Activated naive CD4-positive, alpha-beta T cell treated with anti-CD3 and anti-CD28 coated beads for 36 hours (primary cell): ENCODE measurements at regions of chr2 and their contacts with region 1.

Region 1: GRCh38 chr2:168210895-168211570 is 36.4 kb downstream of the STK39 start:
- DNase-seq: no peak
- H3K4me3 Mint-ChIP-seq: peak overlapping the region; percentile 6
- H3K27ac Mint-ChIP-seq: peak overlapping the region; percentile 98
- H3K4me1 Mint-ChIP-seq: peaks cover 63% of the 10 kb centered on the region
- H3K27me3 Mint-ChIP-seq: no peaks in the 10 kb centered on the region

Region 2: DNA sequence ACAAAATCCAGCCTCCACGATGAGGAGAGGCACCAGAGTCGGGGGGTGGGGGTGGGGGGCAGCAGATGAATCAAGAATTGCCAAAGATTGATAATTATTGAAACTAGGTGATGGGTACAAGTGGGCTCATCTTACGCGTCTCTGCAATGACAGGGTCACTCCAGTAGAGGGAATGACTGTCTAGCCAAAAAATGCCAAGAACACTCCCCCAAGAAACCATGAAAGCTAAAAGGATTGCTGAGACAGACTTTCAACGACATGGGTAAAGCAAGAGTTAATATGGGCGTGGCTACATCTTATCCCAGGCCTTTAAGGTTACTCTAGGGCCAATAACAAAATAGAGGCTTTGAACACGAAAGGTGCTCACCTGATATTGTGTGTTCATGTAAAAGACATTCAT is 50.1 kb before region 1 on chr2:
- CTCF ChIA-PET with region 1: interaction called, 3 read pairs
- intact Hi-C with region 1: loop called (anchors 1 kb)
- DNase-seq: peak; percentile 32
- H3K4me3 Mint-ChIP-seq: no peak overlapping the region
- H3K27ac Mint-ChIP-seq: no peak overlapping the region
- H3K4me1 Mint-ChIP-seq: peaks cover 32% of the 10 kb centered on the region
- H3K27me3 Mint-ChIP-seq: no peaks in the 10 kb centered on the region

Region 3: DNA sequence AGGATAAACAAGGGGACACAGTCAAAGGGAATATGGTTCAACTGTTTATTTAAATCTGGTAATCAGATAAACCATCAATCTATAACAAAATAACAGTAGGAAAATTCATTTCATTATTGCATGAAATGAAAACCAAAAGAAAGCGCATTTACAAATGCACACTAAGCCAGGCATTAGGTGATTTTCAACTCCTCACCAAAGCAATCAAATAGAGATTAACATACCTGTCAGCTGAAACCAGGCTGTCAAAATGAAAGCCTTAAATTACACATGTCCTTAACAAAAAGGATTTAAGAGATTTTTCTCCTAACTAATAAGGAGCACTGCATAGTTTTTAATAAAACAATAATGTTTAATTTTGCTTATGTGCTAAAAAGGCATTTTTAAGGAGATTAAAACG is 13.3 kb after region 1 on chr2:
- CTCF ChIA-PET with region 1: interaction called, 7 read pairs
- intact Hi-C with region 1: loop called (anchors 1 kb)
- DNase-seq: no peak
- H3K4me3 Mint-ChIP-seq: no peak overlapping the region
- H3K27ac Mint-ChIP-seq: no peak overlapping the region
- H3K4me1 Mint-ChIP-seq: peaks cover 46% of the 10 kb centered on the region
- H3K27me3 Mint-ChIP-seq: no peaks in the 10 kb centered on the region

Region 4: GRCh38 chr2:168246483-168247340 is 35.7 kb after region 1 on chr2:
- CTCF ChIA-PET with region 1: interaction called, 3 read pairs
- intact Hi-C with region 1: loop called (anchors 1 kb)
- DNase-seq: peak; percentile 78
- H3K4me3 Mint-ChIP-seq: peak overlapping the region; percentile 88
- H3K27ac Mint-ChIP-seq: peak overlapping the region; percentile 88
- H3K4me1 Mint-ChIP-seq: peaks cover 35% of the 10 kb centered on the region
- H3K27me3 Mint-ChIP-seq: peaks cover 3% of the 10 kb centered on the region

Region 5: GRCh38 chr2:168495524-168495923 is 284.5 kb after region 1 on chr2:
- CTCF ChIA-PET with region 1: no interaction called
- intact Hi-C with region 1: loop called (anchors 1 kb)
- DNase-seq: peak; percentile 35
- H3K4me3 Mint-ChIP-seq: no peak overlapping the region
- H3K27ac Mint-ChIP-seq: no peak overlapping the region
- H3K4me1 Mint-ChIP-seq: peaks cover 61% of the 10 kb centered on the region
- H3K27me3 Mint-ChIP-seq: no peaks in the 10 kb centered on the region

Region 6: DNA sequence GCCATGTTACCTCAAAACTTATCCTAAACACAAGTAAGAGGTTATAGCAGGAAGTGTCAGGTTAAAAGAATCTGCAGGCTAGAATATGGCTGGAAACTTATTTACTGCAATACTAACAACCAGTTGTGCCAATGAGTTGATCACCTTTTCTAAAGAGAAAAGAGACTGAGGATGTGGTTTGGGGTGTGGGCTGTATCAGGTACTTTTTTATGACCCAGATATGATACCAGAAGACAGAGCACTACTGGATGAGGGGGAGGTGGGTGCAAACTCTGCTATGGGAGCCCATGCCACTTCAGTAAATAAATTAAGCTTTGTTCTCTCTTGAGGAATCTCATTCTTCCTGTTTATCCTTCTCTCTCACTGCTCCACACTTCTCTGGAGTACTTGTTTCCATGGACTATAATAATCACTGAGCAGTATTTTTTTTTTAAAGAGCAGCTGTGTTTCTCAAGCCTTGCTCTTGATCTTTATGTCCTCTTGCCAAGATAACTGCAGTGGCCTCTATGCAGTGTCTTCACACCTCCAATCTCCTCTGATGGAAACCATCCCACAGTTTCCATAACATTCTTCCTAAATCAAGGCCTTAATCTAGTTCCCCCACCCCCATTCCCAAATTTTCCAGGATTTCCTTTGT is 540.2 kb after region 1 on chr2:
- CTCF ChIA-PET with region 1: no interaction called
- intact Hi-C with region 1: loop called (anchors 5 kb)
- DNase-seq: peak; percentile 59
- H3K4me3 Mint-ChIP-seq: no peak overlapping the region
- H3K27ac Mint-ChIP-seq: no peak overlapping the region
- H3K4me1 Mint-ChIP-seq: peaks cover 70% of the 10 kb centered on the region
- H3K27me3 Mint-ChIP-seq: no peaks in the 10 kb centered on the region

Region 7: DNA sequence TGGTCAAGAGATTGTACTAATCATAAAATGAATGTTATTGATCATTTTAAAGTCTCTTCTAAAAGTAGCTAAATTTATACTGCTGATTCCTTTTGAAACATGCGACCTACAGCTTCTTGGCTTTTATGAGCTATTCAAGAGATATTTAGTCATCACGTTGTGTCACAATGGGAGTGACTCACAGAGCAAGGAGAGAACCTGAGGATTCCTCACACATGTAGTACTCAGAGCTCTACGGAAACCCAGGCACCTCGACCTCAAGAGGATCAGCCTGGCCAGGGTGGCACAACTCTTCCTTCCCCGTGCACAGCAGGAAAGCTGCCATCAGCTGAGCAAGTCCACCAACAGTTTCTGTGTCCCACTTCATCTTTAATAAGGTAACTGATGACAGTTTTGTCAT is 858.3 kb after region 1 on chr2 and contains the start of gene DHRS9:
- CTCF ChIA-PET with region 1: no interaction called
- intact Hi-C with region 1: loop called (anchors 5 kb)
- DNase-seq: peak; percentile 63
- H3K4me3 Mint-ChIP-seq: peak within 1 kb of the TSS; percentile 37
- H3K27ac Mint-ChIP-seq: no peak within 1 kb of the TSS
- H3K4me1 Mint-ChIP-seq: peaks cover 39% of the 10 kb centered on the region
- H3K27me3 Mint-ChIP-seq: peaks cover 2% of the 10 kb centered on the region
- total RNA-seq, gene DHRS9: 2.0 to 2.6 TPM